T-cell (primary cell): ENCODE measurements at regions of chrX and their contacts with region 1.

Region 1: DNA sequence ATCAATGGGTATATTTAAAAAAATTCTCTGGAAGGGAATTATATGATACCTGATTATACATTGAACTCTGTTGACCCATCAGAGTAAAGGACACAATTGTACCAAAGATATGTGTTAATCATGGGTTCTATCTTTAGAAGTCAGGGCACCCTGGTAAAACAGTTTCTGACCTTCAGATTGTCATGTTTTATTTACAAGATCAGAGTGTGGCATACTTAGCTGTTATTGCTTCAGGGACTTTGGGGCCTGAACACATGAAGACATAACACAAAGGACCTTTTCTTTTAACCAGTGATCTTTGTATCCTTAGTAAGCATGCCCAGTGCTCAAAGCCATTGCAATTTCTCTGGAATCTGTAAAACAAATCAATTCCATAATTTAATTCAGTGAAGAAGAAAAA is 204.8 kb upstream of the RPS6KA3 start:
- DNase-seq: no peak
- ATAC-seq: no peak
- H3K4me3 ChIP-seq: no peak overlapping the region
- H3K4me3 Mint-ChIP-seq: no peak overlapping the region
- H3K27ac ChIP-seq: no peak overlapping the region
- H3K27ac Mint-ChIP-seq: no peak overlapping the region
- H3K4me1 ChIP-seq: no peaks in the 10 kb centered on the region
- H3K4me1 Mint-ChIP-seq: no peaks in the 10 kb centered on the region
- H3K27me3 ChIP-seq: no peaks in the 10 kb centered on the region
- H3K27me3 Mint-ChIP-seq: peaks cover 0 to 7% of the 10 kb centered on the region in 2 donors

Region 2: DNA sequence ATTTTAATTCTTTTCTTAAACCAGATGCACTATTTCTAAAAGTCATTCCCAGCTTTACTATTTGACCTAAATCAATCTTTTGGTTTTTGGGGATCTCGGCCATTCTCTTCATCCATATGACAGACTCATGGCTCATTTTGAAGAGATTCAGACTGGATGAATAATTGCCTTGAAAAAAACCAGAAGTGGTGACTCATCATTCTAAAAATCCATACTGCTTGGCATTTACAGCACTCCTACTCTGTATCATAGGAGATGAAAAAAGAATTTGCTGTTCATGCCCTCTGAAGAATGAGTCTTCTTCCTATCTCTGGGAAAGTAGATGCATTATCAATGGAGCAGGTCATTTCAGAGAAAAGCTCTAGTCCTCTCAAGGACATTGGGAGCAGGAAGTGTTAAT is 15.7 kb after region 1 on chrX:
- CTCF ChIA-PET with region 1: no interaction called
- POLR2A ChIA-PET with region 1: no interaction called
- DNase-seq: no peak
- ATAC-seq: no peak
- H3K4me3 ChIP-seq: no peak overlapping the region
- H3K4me3 Mint-ChIP-seq: no peak overlapping the region
- H3K27ac ChIP-seq: no peak overlapping the region
- H3K27ac Mint-ChIP-seq: no peak overlapping the region
- H3K4me1 ChIP-seq: no peaks in the 10 kb centered on the region
- H3K4me1 Mint-ChIP-seq: no peaks in the 10 kb centered on the region
- H3K27me3 ChIP-seq: no peaks in the 10 kb centered on the region
- H3K27me3 Mint-ChIP-seq: peaks cover 0 to 13% of the 10 kb centered on the region in 2 donors

Region 3: DNA sequence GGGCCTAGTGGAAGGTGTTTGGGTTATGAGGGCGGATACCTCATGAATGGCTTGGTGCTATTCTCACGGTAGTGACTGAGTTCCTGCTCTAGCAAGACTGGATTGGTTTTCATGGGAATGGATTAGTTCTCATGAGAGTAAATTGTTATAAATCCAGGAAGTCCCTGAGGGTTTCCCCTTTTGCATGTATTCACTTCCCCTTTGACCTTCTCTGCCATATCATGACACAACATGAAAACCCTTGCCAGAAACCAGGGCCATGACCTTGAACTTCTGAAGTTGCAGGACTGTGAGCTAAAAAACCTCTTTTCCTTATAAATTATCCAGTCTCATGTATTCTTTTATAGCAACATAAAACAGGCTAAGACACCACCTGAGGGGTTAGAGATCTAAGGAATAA is 325.0 kb after region 1 on chrX:
- CTCF ChIA-PET with region 1: no interaction called
- POLR2A ChIA-PET with region 1: no interaction called
- DNase-seq: no peak
- ATAC-seq: no peak
- H3K4me3 ChIP-seq: no peak overlapping the region
- H3K4me3 Mint-ChIP-seq: no peak overlapping the region
- H3K27ac ChIP-seq: no peak overlapping the region
- H3K27ac Mint-ChIP-seq: no peak overlapping the region
- H3K4me1 ChIP-seq: no peaks in the 10 kb centered on the region
- H3K4me1 Mint-ChIP-seq: no peaks in the 10 kb centered on the region
- H3K27me3 ChIP-seq: no peaks in the 10 kb centered on the region
- H3K27me3 Mint-ChIP-seq: peaks cover 0 to 3% of the 10 kb centered on the region in 2 donors

Region 4: DNA sequence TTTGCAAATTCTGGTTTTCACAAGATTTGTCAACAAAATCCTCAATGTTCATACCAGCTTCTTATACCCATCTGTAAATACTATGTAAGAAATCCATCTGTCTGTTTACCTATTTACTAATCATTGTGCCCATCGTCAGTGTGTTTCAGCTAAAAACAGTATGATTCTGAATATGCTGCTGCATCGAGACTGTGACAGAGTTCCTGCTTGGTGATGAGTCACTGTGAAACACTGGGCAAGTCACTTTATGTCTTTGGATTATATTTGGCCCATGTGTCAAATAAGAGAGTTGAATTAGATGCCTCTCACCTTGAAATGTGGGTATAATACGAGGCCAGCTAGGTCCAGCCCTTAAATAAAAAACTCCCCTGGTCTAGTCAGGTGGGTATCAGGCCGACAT is 1880.5 kb after region 1 on chrX:
- CTCF ChIA-PET with region 1: no interaction called
- POLR2A ChIA-PET with region 1: interaction called in 1 of 2 experiments, 11 read pairs
- DNase-seq: no peak
- ATAC-seq: no peak
- H3K4me3 ChIP-seq: no peak overlapping the region
- H3K4me3 Mint-ChIP-seq: no peak overlapping the region
- H3K27ac ChIP-seq: no peak overlapping the region
- H3K27ac Mint-ChIP-seq: no peak overlapping the region
- H3K4me1 ChIP-seq: no peaks in the 10 kb centered on the region
- H3K4me1 Mint-ChIP-seq: no peaks in the 10 kb centered on the region
- H3K27me3 ChIP-seq: no peaks in the 10 kb centered on the region
- H3K27me3 Mint-ChIP-seq: no peaks in the 10 kb centered on the region